PC-3 (cell line): ENCODE measurements at regions of chr14 and their contacts with region 1.

Region 1: DNA sequence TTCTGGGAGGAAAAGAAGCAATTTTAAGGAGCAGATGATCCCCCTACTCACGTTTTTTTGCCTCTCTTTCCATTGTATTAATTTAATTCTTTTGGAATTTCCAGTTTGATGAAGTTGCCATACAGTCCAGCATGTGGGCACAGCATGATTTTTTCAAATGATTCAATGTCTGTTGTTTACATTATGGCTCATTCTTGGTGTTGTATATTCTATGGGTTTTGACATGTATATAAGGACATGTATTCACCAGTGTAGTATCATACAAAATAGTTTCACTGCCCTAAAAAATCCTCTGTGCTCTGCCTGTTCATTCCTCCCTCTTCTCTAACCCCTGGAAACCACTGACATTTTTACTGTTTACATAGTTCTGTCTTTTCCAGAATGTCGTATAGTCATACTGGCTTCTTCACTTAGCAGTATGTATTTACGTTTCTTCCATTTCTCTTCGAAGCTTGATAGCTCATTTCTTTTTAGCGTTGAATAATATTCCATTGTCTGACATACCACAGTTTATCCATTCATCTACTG is 13.3 kb upstream of the KLHDC2 start:
- DNase-seq: peak; percentile 59
- ATAC-seq: peak; percentile 100
- H3K4me3 ChIP-seq: no peak overlapping the region
- H3K27ac ChIP-seq: no peak overlapping the region
- H3K4me1 ChIP-seq: peaks cover 8% of the 10 kb centered on the region; the same call in 1 of the 2 replicates
- H3K27me3 ChIP-seq: no peaks in the 10 kb centered on the region
- CTCF ChIP-seq: no peak

Region 2: GRCh38 chr14:49703965-49704364 is 50.7 kb before region 1 on chr14:
- CTCF ChIA-PET with region 1: no interaction called
- POLR2A ChIA-PET with region 1: no interaction called
- intact Hi-C with region 1: loop called (anchors 5 kb)
- DNase-seq: no peak
- ATAC-seq: no peak
- H3K4me3 ChIP-seq: no peak overlapping the region
- H3K27ac ChIP-seq: no peak overlapping the region
- H3K4me1 ChIP-seq: no peaks in the 10 kb centered on the region
- H3K27me3 ChIP-seq: no peaks in the 10 kb centered on the region
- CTCF ChIP-seq: no peak

Region 3: GRCh38 chr14:49720744-49721143 is 33.9 kb before region 1 on chr14:
- CTCF ChIA-PET with region 1: interaction called, 11 read pairs
- POLR2A ChIA-PET with region 1: no interaction called
- intact Hi-C with region 1: no loop called
- DNase-seq: no peak
- ATAC-seq: no peak
- H3K4me3 ChIP-seq: no peak overlapping the region
- H3K27ac ChIP-seq: no peak overlapping the region
- H3K4me1 ChIP-seq: no peaks in the 10 kb centered on the region
- H3K27me3 ChIP-seq: no peaks in the 10 kb centered on the region
- CTCF ChIP-seq: no peak